Activated T-helper 1 cell treated with anti-CD3 and anti-CD28 coated beads, Interleukin-12 subunit alpha, Interleukin-12 subunit beta, Interleukin-2, Interleukin-4 antibody, amounts not matched to agents 30 ng/mL and 10 ng/mL and 1 ng/mL, durations not matched to agents 14 hours and 24 hours and 36 hours (primary cell): ENCODE measurements at regions of chr15 and their contacts with region 1.

Region 1: DNA sequence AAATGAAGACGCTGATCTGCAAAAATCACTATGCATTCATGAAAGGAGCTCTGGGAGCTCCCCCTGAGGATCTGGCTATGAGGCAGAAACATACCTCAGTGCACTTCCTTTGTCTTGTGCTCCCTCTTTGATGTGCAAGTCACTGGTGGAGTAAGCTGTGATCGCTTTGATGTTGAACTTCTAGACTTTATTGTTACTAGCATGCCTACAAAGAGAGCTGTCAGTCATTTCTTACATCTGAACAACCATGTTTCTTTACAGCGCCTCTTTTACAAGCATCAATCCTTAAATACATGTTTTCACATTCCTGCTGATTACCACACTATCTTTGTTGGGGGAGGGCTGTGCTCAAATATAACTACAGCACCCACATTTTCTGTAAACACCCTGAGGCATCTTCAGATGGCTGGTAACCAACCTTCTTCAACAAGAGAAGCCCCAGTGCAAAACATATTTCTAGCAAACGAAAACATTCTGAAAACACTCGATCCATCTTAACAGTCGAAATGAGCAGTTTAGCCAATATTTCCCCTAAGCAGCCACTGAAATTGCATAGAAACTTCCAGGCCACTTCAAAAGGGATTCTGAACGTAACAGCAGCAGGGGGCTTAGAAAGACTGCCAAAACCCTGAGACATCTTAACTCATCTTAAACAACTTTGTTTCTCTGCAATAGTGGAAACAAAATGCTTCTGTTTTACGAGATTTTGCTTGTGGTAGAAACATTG is 101.9 kb upstream of the ICE2 start:
- DNase-seq: peak; percentile 57
- H3K4me3 Mint-ChIP-seq: peak overlapping the region; percentile 74
- H3K27ac Mint-ChIP-seq: peak overlapping the region; percentile 95
- H3K4me1 Mint-ChIP-seq: peaks cover 79% of the 10 kb centered on the region
- H3K27me3 Mint-ChIP-seq: no peaks in the 10 kb centered on the region

Region 2: DNA sequence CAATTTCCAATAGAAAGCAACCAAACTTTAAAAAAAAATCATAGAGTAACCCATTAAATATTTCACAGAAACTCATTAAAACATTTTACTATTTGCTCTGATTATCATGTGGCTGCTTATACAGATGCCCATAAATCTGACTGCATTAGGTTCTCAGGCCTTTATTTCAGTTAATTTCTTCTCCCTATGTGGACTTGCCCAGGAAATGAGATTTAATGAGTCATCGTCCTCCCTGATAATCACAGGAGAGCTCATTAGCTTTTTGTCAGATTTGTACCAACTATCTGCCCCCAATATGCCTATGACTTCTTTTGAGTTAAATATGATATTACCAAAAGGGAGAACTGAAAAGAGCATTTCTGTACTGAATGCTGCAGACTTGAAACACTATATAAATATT is 408.7 kb before region 1 on chr15:
- intact Hi-C with region 1: no loop called
- DNase-seq: no peak
- H3K4me3 Mint-ChIP-seq: no peak overlapping the region
- H3K27ac Mint-ChIP-seq: no peak overlapping the region
- H3K4me1 Mint-ChIP-seq: no peaks in the 10 kb centered on the region
- H3K27me3 Mint-ChIP-seq: peaks cover 9% of the 10 kb centered on the region

Region 3: GRCh38 chr15:60540002-60540651 is 40.7 kb before region 1 on chr15:
- intact Hi-C with region 1: loop called (anchors 1 kb)
- DNase-seq: no peak
- H3K4me3 Mint-ChIP-seq: peak overlapping the region; percentile 28
- H3K27ac Mint-ChIP-seq: peak overlapping the region; percentile 91
- H3K4me1 Mint-ChIP-seq: peaks cover 86% of the 10 kb centered on the region
- H3K27me3 Mint-ChIP-seq: no peaks in the 10 kb centered on the region